ENCODE measurements at regions of chr1 and their contacts with region 1.

Region 1: GRCh38 chr1:54052934-54053744 is at the starts of genes TCEANC2 and TMEM59:
- DNase-seq: peak; percentile 93 to 99
- ATAC-seq: peak; percentile 88 to 96 (median 90)
- H3K4me3 ChIP-seq: peak within 1 kb of the TSS; percentile 88
- H3K4me3 Mint-ChIP-seq: no peak within 1 kb of the TSS
- H3K27ac ChIP-seq: peak within 1 kb of the TSS; percentile 84
- H3K27ac Mint-ChIP-seq: no peak within 1 kb of the TSS
- H3K4me1 ChIP-seq: peaks cover 33% of the 10 kb centered on the region
- H3K4me1 Mint-ChIP-seq: peaks cover 23 to 24% of the 10 kb centered on the region in 2 donors
- H3K27me3 ChIP-seq: no peaks in the 10 kb centered on the region
- H3K27me3 Mint-ChIP-seq: no peaks in the 10 kb centered on the region
- CTCF ChIP-seq: no peak
- total RNA-seq, gene TCEANC2: 5.1 to 9.5 (median 7.3) TPM
- total RNA-seq, gene TMEM59: 187 to 202 (median 199) TPM

Region 2: DNA sequence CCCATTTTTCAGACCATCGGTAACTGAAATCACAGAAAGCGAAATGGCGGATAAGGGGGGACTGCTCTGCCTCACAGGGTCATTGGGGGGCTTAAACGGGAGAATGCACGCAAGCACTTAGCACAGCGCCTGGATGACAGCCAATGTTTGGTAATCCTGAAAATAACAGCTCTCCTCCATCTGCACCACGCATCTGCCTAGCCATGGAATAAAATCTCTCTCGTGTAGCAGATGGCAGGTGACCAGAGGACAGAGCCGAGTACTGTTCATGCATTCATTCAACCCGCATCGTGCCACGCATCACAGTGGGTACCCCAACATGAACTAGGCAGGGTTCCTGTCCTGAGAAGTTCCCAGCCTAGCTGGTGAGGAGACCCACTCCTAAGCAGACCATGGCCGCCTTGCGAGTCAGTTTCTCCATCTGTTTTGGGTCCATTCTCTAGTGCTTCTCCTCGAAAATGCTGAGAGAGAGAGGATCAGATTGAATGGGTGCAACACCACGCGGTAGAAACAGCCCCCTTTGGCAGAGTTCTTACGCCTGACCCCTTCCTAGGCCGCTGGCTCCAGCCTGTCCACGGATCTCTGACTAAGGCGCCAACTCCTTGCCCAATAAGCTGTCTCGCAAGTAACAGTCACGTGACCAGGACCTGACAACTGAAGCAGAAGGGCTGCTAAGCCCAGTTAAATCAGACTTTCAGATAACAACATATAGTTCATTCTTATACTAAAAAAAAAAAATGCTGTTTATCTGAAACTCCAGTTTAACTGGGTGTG is 918.0 kb before region 1 on chr1:
- intact Hi-C with region 1: no loop called
- DNase-seq: peak in 1 of 2 donors; percentile 31
- ATAC-seq: peak; percentile 44 to 56 (median 55)
- H3K4me3 ChIP-seq: no peak overlapping the region
- H3K4me3 Mint-ChIP-seq: peak overlapping the region; percentile 64
- H3K27ac ChIP-seq: peak overlapping the region; percentile 73
- H3K27ac Mint-ChIP-seq: peak overlapping the region; percentile 83 to 84
- H3K4me1 ChIP-seq: peaks cover 66% of the 10 kb centered on the region
- H3K4me1 Mint-ChIP-seq: peaks cover 37 to 59% of the 10 kb centered on the region in 2 donors
- H3K27me3 ChIP-seq: no peaks in the 10 kb centered on the region
- H3K27me3 Mint-ChIP-seq: peaks cover 0 to 2% of the 10 kb centered on the region in 2 donors
- CTCF ChIP-seq: no peak

Region 3: GRCh38 chr1:53837924-53838652 is 215.1 kb before region 1 on chr1 and contains the start of gene NDC1:
- intact Hi-C with region 1: loop called (anchors 1 kb)
- DNase-seq: peak; percentile 84 to 95
- ATAC-seq: peak; percentile 89 to 96 (median 90)
- H3K4me3 ChIP-seq: peak within 1 kb of the TSS; percentile 83
- H3K4me3 Mint-ChIP-seq: peak within 1 kb of the TSS; percentile 98
- H3K27ac ChIP-seq: peak within 1 kb of the TSS; percentile 97
- H3K27ac Mint-ChIP-seq: peak within 1 kb of the TSS; percentile 95 to 98
- H3K4me1 ChIP-seq: peaks cover 7% of the 10 kb centered on the region
- H3K4me1 Mint-ChIP-seq: peaks cover 19 to 23% of the 10 kb centered on the region in 2 donors
- H3K27me3 ChIP-seq: no peaks in the 10 kb centered on the region
- H3K27me3 Mint-ChIP-seq: no peaks in the 10 kb centered on the region
- CTCF ChIP-seq: no peak
- total RNA-seq, gene NDC1: 4.3 to 6.3 (median 5.2) TPM

Measured in natural killer cell (primary cell).